Right ventricle myocardium superior (tissue), 1 donor: ENCODE measurements at regions of chr6 and their contacts with region 1.

Region 1: DNA sequence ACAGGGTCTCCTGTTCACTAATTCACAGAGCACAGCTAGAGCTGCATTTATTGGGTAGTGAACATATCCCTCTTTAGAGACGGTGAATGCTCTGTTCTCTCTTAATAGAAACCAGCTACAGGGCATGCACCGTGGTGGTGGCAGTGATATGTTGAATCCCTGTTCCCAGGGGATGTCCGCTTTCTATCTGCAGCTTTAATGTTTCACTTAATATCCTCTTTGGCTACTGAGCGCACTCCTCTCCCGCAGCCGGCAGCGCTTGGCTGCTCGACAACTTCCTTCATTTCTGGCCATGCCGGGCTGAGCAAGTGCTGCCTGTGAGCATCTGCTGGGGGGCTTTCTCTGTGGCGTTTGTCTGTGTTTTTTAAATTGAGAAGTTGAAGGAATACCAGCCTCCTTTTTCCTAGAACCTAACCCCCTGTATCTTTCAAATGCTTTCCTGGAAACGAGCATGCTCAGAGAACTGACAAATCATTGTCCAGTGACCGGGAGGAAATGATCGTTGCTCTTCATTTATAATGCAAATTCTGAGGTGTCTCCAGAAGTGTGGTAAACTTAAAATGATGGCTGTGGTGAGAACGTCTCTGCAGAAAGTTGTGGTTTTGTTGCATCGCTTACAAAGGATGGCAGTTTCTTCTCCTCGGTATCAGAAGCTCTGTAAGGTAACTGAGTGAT is 297.9 kb downstream of the UTRN start:
- DNase-seq: peak; percentile 71
- ATAC-seq: peak; percentile 81

Region 2: GRCh38 chr6:144637541-144637940 is 54.5 kb after region 1 on chr6:
- intact Hi-C with region 1: no loop called
- DNase-seq: no peak
- ATAC-seq: no peak

Region 3: GRCh38 chr6:144835322-144835973 is 252.4 kb after region 1 on chr6:
- intact Hi-C with region 1: loop called (anchors 10 kb)
- DNase-seq: no peak
- ATAC-seq: no peak

Region 4: DNA sequence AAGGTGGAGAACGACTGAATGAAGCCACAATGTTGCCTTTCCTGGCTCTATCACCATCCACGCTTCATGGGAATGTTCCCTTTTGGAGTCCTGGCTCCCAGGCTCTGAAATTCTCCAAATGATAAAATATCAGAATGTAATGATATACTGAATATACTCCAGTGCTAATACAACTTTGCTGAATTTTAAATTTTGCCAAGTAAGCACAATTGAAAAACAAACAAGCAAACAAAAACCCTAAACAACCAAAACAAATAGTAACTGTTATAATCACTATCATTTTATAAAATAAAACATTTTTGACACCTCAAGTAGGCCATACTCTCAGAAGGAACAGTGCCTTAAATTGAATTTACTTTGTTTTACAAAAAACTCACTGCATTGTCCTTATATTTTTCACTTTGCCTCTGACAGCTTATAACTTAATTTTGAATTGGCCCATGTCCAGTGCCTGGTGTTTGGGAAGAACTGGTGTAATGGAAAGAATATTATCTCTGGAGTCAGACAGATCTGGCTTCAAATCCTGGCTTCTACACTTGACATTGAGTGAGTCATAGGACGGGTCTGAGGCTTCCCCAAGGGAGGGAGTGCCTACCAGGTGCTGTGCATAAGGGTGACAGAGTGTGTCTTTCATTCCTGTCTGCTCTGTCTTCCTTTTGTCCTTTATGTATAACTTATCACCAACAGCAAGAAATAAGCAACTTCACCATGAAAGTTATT is 453.9 kb after region 1 on chr6:
- intact Hi-C with region 1: loop called (anchors 10 kb)
- DNase-seq: no peak
- ATAC-seq: peak; percentile 71

Region 5: DNA sequence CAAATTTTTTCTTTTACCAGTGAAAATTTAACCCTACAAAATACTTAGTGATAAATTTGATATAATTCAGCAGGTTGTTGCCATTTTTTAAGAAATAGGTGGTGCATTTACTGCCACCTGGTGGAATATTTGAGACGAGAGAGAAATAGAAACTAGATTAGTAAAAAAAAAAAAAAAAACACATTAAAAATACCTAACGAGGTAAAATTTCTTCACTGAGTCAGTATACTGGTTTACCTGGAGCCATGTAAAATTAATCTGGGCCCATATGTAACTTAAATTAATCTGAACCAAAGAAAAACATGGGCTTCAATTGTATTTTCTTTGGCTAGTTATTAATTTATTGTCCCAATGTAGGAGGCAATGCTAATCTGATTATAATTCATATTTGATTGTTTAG is 631.5 kb after region 1 on chr6:
- intact Hi-C with region 1: loop called (anchors 10 kb)
- DNase-seq: no peak
- ATAC-seq: no peak

Region 6: GRCh38 chr6:145621776-145622175 is 1038.7 kb after region 1 on chr6:
- intact Hi-C with region 1: loop called (anchors 10 kb)
- DNase-seq: no peak
- ATAC-seq: no peak